Sigmoid colon (tissue), 7 donors: ENCODE measurements at regions of chr21 and their contacts with region 1.

Region 1: DNA sequence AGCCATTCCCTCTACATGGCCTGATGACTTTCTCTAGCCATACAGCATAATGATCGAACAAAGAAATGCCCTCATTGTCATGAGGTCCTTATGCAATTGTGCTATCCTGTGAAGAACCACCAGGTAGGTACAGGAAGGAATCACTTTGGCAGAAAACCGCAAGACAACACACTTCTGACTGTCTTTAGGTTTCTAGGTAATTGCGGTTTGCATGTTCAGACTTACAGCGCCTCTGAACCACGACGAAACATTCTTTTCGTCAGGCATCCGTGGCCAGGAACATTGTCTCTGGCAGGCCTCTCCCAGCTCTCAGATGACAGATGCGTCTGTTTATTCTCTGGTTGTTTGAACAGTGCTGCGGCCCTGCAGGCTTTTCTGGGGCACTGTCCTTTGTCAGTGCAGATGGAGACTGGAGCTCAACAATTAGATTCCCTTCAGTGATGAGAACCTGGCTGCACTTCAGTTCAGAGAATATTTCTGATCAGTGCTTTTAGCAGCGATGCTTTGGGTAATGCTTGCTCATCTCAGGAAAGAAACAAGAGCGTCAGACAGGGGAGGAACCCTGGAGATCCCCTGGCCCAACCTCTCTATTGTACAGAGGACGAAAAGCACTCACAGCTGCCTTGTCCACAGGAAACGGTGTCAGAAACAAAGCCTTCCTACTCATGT is 63.4 kb downstream of the B3GALT5 start:
- DNase-seq: peak; percentile 91
- H3K4me3 ChIP-seq: peak overlapping the region in 3 of 4 donors; percentile 21 to 38 (median 30)
- H3K27ac ChIP-seq: peak overlapping the region; percentile 71 to 89 (median 81)
- H3K4me1 ChIP-seq: peaks cover 0 to 44% (median 32%) of the 10 kb centered on the region in 4 donors
- H3K27me3 ChIP-seq: no peaks in the 10 kb centered on the region
- CTCF ChIP-seq: no peak
- EP300 ChIP-seq: peak in 3 of 4 donors; percentile 76 to 89 (median 86)
- POLR2A ChIP-seq: no peak

Region 2: DNA sequence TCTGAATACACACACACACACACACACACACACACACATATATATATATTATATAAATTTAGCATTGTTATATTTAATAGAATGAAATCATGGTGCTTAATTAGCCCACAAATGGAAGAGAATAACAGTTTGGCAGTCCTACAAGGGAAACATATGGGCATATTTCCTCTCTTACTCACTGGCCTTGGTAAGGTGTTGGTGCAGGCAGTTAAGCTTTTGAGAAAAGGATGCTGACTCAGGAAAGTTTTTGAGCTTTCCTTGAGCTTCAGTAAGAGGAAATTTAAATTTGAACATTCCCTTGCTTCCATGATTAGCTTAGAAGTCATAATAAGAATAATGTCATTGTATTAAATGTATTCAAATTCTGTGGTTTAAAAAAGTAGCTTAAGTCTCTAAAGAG is 100.4 kb before region 1 on chr21:
- intact Hi-C with region 1: no loop called
- DNase-seq: no peak
- H3K4me3 ChIP-seq: no peak overlapping the region
- H3K27ac ChIP-seq: no peak overlapping the region
- H3K4me1 ChIP-seq: no peaks in the 10 kb centered on the region
- H3K27me3 ChIP-seq: no peaks in the 10 kb centered on the region
- CTCF ChIP-seq: no peak
- EP300 ChIP-seq: no peak
- POLR2A ChIP-seq: no peak

Region 3: GRCh38 chr21:39660191-39660980 is 15.7 kb before region 1 on chr21:
- intact Hi-C with region 1: loop called (anchors 2 kb)
- DNase-seq: peak; percentile 84
- H3K4me3 ChIP-seq: peak overlapping the region in 2 of 4 donors; percentile 13 to 27
- H3K27ac ChIP-seq: peak overlapping the region; percentile 39 to 78 (median 68)
- H3K4me1 ChIP-seq: peaks cover 0 to 32% (median 24%) of the 10 kb centered on the region in 4 donors
- H3K27me3 ChIP-seq: no peaks in the 10 kb centered on the region
- CTCF ChIP-seq: no peak
- EP300 ChIP-seq: peak in 1 of 4 donors; percentile 11
- POLR2A ChIP-seq: no peak

Region 4: GRCh38 chr21:39763255-39763945 is 87.3 kb after region 1 on chr21:
- intact Hi-C with region 1: no loop called
- DNase-seq: no peak
- H3K4me3 ChIP-seq: no peak overlapping the region
- H3K27ac ChIP-seq: no peak overlapping the region
- H3K4me1 ChIP-seq: no peaks in the 10 kb centered on the region
- H3K27me3 ChIP-seq: no peaks in the 10 kb centered on the region
- CTCF ChIP-seq: no peak
- EP300 ChIP-seq: no peak
- POLR2A ChIP-seq: no peak

Region 5: GRCh38 chr21:39776589-39776988 is 100.5 kb after region 1 on chr21:
- intact Hi-C with region 1: no loop called
- DNase-seq: no peak
- H3K4me3 ChIP-seq: no peak overlapping the region
- H3K27ac ChIP-seq: no peak overlapping the region
- H3K4me1 ChIP-seq: no peaks in the 10 kb centered on the region
- H3K27me3 ChIP-seq: no peaks in the 10 kb centered on the region
- CTCF ChIP-seq: no peak
- EP300 ChIP-seq: no peak
- POLR2A ChIP-seq: no peak